Left cardiac atrium (tissue), 4 donors: ENCODE measurements at regions of chr18 and their contacts with region 1.

Region 1: GRCh38 chr18:50099725-50100407 is 95.1 kb downstream of the MYO5B start:
- DNase-seq: no peak
- ATAC-seq: peak in 1 of 2 donors; percentile 60

Region 2: GRCh38 chr18:50044402-50044801 is 55.5 kb before region 1 on chr18:
- intact Hi-C with region 1: loop called in 1 of 2 experiments (anchors 10 kb)
- DNase-seq: no peak
- ATAC-seq: no peak

Region 3: GRCh38 chr18:50183556-50183955 is 83.7 kb after region 1 on chr18:
- intact Hi-C with region 1: loop called in 1 of 2 experiments (anchors 10 kb)
- DNase-seq: no peak
- ATAC-seq: no peak